CD8-positive, alpha-beta memory T cell (primary cell): ENCODE measurements at regions of chr20 and their contacts with region 1.

Region 1: GRCh38 chr20:2172305-2173175 is 70.9 kb downstream of the STK35 start:
- DNase-seq: peak; percentile 37 to 70 (median 47)
- H3K4me3 ChIP-seq: no peak overlapping the region
- H3K4me3 Mint-ChIP-seq: no peak overlapping the region
- H3K27ac ChIP-seq: no peak overlapping the region
- H3K27ac Mint-ChIP-seq: peak overlapping the region in 1 of 8 donors; percentile 48
- H3K4me1 ChIP-seq: no peaks in the 10 kb centered on the region
- H3K4me1 Mint-ChIP-seq: peaks cover 3 to 4% (median 3%) of the 10 kb centered on the region in 3 donors
- H3K27me3 ChIP-seq: no peaks in the 10 kb centered on the region
- H3K27me3 Mint-ChIP-seq: peaks cover 5 to 7% of the 10 kb centered on the region in 2 donors

Region 2: GRCh38 chr20:1965520-1966351 is 206.8 kb before region 1 on chr20:
- CTCF ChIA-PET with region 1: interaction called, 54 read pairs
- POLR2A ChIA-PET with region 1: no interaction called
- DNase-seq: peak; percentile 34 to 73 (median 55)
- H3K4me3 ChIP-seq: no peak overlapping the region
- H3K4me3 Mint-ChIP-seq: peak overlapping the region in 4 of 7 donors; percentile 28 to 42 (median 32)
- H3K27ac ChIP-seq: no peak overlapping the region
- H3K27ac Mint-ChIP-seq: no peak overlapping the region
- H3K4me1 ChIP-seq: peaks cover 10% of the 10 kb centered on the region
- H3K4me1 Mint-ChIP-seq: peaks cover 7% of the 10 kb centered on the region in 3 donors
- H3K27me3 ChIP-seq: no peaks in the 10 kb centered on the region
- H3K27me3 Mint-ChIP-seq: peaks cover 31 to 40% of the 10 kb centered on the region in 2 donors

Region 3: GRCh38 chr20:2005831-2006426 is 166.6 kb before region 1 on chr20:
- CTCF ChIA-PET with region 1: interaction called, 12 read pairs
- POLR2A ChIA-PET with region 1: no interaction called
- DNase-seq: peak; percentile 16 to 66 (median 33)
- H3K4me3 ChIP-seq: no peak overlapping the region
- H3K4me3 Mint-ChIP-seq: no peak overlapping the region
- H3K27ac ChIP-seq: no peak overlapping the region
- H3K27ac Mint-ChIP-seq: no peak overlapping the region
- H3K4me1 ChIP-seq: no peaks in the 10 kb centered on the region
- H3K4me1 Mint-ChIP-seq: no peaks in the 10 kb centered on the region
- H3K27me3 ChIP-seq: no peaks in the 10 kb centered on the region
- H3K27me3 Mint-ChIP-seq: peaks cover 26 to 51% of the 10 kb centered on the region in 2 donors

Region 4: DNA sequence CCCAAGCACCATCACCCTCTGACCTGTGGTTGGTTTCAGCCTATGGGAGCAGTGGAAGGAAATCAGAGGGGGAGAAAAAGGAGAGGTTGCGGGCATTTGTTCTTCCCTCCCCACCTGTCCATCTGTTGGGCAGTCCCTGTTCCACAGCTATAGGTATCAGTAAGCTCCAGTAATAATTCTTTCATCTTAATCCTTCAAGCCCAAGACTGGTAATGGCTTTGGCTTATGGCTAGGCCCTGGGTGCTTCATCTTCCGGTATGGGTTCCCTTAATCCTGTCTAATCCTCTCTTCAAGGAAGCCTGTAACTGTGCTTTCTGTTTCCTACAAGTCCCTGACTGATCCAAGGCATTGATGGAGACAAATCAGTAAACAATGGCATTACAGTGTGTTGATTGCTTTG is 113.1 kb before region 1 on chr20:
- CTCF ChIA-PET with region 1: no interaction called
- POLR2A ChIA-PET with region 1: no interaction called
- DNase-seq: no peak
- H3K4me3 ChIP-seq: no peak overlapping the region
- H3K4me3 Mint-ChIP-seq: no peak overlapping the region
- H3K27ac ChIP-seq: no peak overlapping the region
- H3K27ac Mint-ChIP-seq: no peak overlapping the region
- H3K4me1 ChIP-seq: no peaks in the 10 kb centered on the region
- H3K4me1 Mint-ChIP-seq: no peaks in the 10 kb centered on the region
- H3K27me3 ChIP-seq: no peaks in the 10 kb centered on the region
- H3K27me3 Mint-ChIP-seq: peaks cover 16 to 56% of the 10 kb centered on the region in 2 donors

Region 5: DNA sequence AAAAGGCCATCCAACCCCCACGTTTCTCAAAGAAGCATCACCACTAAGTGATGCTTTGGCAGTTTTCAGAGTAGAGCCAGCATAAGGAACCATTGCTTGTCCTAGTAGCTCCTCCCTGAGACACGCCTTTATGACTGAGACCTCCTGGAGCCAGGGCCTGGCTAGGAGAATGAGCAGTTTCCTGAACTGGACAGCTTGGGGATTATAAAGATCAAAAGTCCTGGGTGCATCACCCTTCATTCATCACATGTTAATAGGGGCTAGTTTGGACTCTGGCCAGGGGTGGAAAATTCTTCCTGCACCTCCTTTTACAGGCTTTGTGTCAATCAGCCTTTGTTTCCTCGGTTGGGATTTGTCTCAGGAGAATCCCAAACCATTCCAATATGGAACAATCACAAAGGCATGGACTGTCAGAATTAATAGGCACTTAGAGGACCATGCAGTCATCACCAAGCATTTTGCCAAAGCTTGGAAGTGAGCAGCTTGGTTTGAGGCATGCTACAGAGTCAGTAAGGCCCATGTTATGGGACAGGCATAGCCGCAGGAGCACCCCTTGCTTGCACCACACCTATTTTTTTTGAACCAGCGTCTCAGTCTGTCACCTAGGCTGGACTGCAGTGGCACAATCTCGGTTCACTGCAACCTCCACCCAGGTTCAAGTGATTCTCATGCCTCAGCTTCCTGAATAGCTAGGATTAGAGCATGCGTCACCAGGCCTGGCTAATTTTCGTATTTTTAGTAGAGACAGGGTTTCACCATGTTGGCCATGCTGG is 58.4 kb after region 1 on chr20:
- CTCF ChIA-PET with region 1: no interaction called
- POLR2A ChIA-PET with region 1: no interaction called
- DNase-seq: no peak
- H3K4me3 ChIP-seq: no peak overlapping the region
- H3K4me3 Mint-ChIP-seq: no peak overlapping the region
- H3K27ac ChIP-seq: no peak overlapping the region
- H3K27ac Mint-ChIP-seq: no peak overlapping the region
- H3K4me1 ChIP-seq: no peaks in the 10 kb centered on the region
- H3K4me1 Mint-ChIP-seq: no peaks in the 10 kb centered on the region
- H3K27me3 ChIP-seq: no peaks in the 10 kb centered on the region
- H3K27me3 Mint-ChIP-seq: peaks cover 0 to 19% of the 10 kb centered on the region in 2 donors